ENCODE measurements at regions of chr2 and their contacts with region 1.

Region 1: DNA sequence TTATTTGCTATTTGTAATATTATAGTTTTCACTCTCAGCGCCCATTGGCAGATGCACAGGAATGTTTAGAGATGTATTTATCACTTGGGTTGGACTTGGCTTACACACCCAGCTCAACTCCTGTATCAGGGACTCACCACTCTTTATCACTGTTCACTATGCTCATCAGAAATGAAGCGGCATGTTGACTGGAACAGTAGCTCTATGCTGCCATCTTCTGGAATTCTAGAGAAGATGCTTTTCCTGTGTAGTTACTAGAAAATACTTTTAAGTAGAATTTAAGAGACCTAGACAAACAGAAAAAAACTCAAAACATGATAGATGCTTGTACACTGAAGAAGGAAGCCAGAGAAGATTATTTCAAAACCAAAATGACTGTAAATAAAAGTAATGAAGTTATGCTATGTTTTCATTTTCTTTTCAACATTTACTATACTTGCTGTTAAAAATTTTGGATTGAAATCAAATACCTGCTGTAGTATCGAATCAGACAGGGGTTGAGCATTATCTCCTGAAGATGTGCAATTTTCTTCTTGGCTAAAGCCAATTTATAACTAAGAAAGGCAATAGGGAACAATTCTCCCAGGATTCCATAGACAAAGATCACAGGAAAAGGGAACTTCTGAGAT is 47.4 kb upstream of the NXPH2 start:
- DNase-seq: no peak
- ATAC-seq: peak; percentile 55
- H3K4me3 Mint-ChIP-seq: no peak overlapping the region
- H3K27ac Mint-ChIP-seq: no peak overlapping the region
- H3K4me1 Mint-ChIP-seq: peaks cover 11% of the 10 kb centered on the region; the same call in 1 of the 2 replicates
- H3K27me3 Mint-ChIP-seq: no peaks in the 10 kb centered on the region
- CTCF ChIP-seq: peak; percentile 65

Region 2: GRCh38 chr2:137910641-137911040 is 916.9 kb before region 1 on chr2:
- CTCF ChIA-PET with region 1: interaction called, 12 read pairs
- POLR2A ChIA-PET with region 1: no interaction called
- DNase-seq: no peak
- ATAC-seq: no peak
- H3K4me3 Mint-ChIP-seq: no peak overlapping the region
- H3K27ac Mint-ChIP-seq: no peak overlapping the region
- H3K4me1 Mint-ChIP-seq: 0 out of 2 replicates have a peak, but pooled peaks cover 5% of the 10 kb centered on the region
- H3K27me3 Mint-ChIP-seq: no peaks in the 10 kb centered on the region
- CTCF ChIP-seq: 0 out of 2 replicates have a peak, but pooled peaks have one; percentile 17

Region 3: DNA sequence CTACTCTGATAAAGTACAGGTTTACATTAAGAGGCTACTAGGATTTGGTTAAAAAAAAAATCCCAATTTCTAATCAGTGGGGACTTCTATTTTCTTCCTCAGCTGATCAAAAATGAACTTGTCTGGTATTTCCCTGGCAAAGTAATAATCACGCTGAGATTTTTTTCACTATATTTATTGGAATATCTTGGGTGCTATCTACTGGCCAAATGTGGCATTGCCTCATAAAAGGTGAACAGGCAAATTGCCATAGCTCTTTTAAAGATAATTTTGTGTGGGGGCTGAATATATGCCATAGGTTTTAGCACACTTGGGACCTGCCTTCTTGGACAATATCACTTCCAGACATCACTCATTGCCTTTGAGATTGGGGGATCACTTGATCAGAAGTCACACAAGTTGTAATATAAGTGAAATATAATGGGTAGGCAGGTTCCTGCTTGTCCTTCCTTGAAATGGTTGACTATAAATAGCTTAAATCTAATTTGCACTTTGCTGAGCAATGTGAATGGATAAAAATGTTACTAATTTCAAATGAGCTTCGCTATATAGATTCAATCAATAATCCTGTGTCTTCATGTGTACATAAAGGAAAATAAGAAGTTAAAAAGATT is 40.4 kb before region 1 on chr2:
- CTCF ChIA-PET with region 1: interaction called, 24 read pairs
- POLR2A ChIA-PET with region 1: no interaction called
- DNase-seq: no peak
- ATAC-seq: peak; percentile 41; the same call in 1 of the 2 replicates
- H3K4me3 Mint-ChIP-seq: no peak overlapping the region
- H3K27ac Mint-ChIP-seq: no peak overlapping the region
- H3K4me1 Mint-ChIP-seq: peaks cover 2% of the 10 kb centered on the region
- H3K27me3 Mint-ChIP-seq: peaks cover 33% of the 10 kb centered on the region
- CTCF ChIP-seq: peak; percentile 47

Region 4: GRCh38 chr2:138814120-138814898 is 13.2 kb before region 1 on chr2:
- CTCF ChIA-PET with region 1: interaction called, 76 read pairs
- POLR2A ChIA-PET with region 1: no interaction called
- DNase-seq: peak; percentile 29
- ATAC-seq: peak; percentile 93
- H3K4me3 Mint-ChIP-seq: no peak overlapping the region
- H3K27ac Mint-ChIP-seq: no peak overlapping the region
- H3K4me1 Mint-ChIP-seq: peaks cover 14% of the 10 kb centered on the region
- H3K27me3 Mint-ChIP-seq: no peaks in the 10 kb centered on the region
- CTCF ChIP-seq: no peak

Region 5: GRCh38 chr2:138838851-138839620 is 11.5 kb after region 1 on chr2:
- CTCF ChIA-PET with region 1: no interaction called
- POLR2A ChIA-PET with region 1: no interaction called
- DNase-seq: no peak
- ATAC-seq: no peak
- H3K4me3 Mint-ChIP-seq: no peak overlapping the region
- H3K27ac Mint-ChIP-seq: no peak overlapping the region
- H3K4me1 Mint-ChIP-seq: no peaks in the 10 kb centered on the region
- H3K27me3 Mint-ChIP-seq: no peaks in the 10 kb centered on the region
- CTCF ChIP-seq: no peak

Region 6: DNA sequence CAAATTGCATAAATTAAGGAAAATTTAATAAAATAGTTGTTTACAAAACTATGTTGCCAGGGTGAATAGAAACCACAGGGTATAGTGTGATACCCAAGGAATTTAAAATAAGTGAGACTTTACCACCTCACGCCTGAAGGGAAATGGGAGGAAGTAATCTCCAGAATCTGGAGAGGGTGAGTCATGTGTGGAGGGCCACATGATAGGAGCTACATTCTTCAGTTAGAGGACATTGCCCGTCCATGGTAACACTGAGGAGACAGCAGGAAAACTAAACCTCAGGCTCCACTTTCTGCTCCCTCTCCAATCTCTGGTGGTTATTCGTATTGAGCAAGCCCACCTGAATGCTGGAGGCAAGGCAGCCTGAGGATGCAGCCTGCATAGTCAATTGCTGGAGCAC is 49.9 kb after region 1 on chr2:
- CTCF ChIA-PET with region 1: no interaction called
- POLR2A ChIA-PET with region 1: no interaction called
- DNase-seq: no peak
- ATAC-seq: no peak; the same call in 1 of the 2 replicates
- H3K4me3 Mint-ChIP-seq: no peak overlapping the region
- H3K27ac Mint-ChIP-seq: no peak overlapping the region
- H3K4me1 Mint-ChIP-seq: peaks cover 5% of the 10 kb centered on the region
- H3K27me3 Mint-ChIP-seq: no peaks in the 10 kb centered on the region
- CTCF ChIP-seq: no peak

Measured in WTC11 (cell line).